ENCODE measurements at regions of chr7 and their contacts with region 1.

Region 1: GRCh38 chr7:141649865-141650634 is 51.9 kb downstream of the DENND11 start:
- DNase-seq: peak; percentile 59 to 80 (median 71)
- ATAC-seq: peak; percentile 92 to 93
- H3K4me3 ChIP-seq: no peak overlapping the region
- H3K27ac ChIP-seq: no peak overlapping the region
- H3K4me1 ChIP-seq: peaks cover 2% of the 10 kb centered on the region
- H3K27me3 ChIP-seq: no peaks in the 10 kb centered on the region

Region 2: GRCh38 chr7:141402277-141402996 is 247.6 kb before region 1 on chr7:
- intact Hi-C with region 1: no loop called
- DNase-seq: no peak
- ATAC-seq: peak; percentile 54 to 73
- H3K4me3 ChIP-seq: no peak overlapping the region
- H3K27ac ChIP-seq: peak overlapping the region; percentile 48
- H3K4me1 ChIP-seq: peaks cover 3% of the 10 kb centered on the region
- H3K27me3 ChIP-seq: no peaks in the 10 kb centered on the region

Region 3: DNA sequence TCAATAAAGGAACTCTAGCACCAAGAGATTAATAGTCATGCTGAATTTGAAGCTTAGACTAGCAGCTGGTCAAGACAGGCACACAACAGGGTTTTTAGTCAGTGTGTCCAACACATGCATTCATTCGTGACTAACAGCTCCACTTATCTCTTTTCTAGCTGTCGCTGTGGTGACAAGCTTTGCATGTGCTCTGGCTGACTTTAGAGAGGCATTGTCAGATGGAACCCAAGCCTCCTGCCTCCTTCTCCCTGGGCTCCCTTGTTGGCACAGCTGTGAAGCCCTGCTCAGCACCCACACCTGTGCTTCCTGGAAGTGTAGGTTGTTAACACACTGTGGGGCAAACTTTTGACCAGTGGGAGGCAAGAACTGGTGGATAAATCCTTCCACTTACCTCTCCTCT is 108.7 kb before region 1 on chr7:
- intact Hi-C with region 1: loop called in 1 of 4 experiments (anchors 10 kb)
- DNase-seq: no peak
- ATAC-seq: peak in 1 of 2 donors; percentile 21
- H3K4me3 ChIP-seq: no peak overlapping the region
- H3K27ac ChIP-seq: no peak overlapping the region
- H3K4me1 ChIP-seq: peaks cover 2% of the 10 kb centered on the region
- H3K27me3 ChIP-seq: no peaks in the 10 kb centered on the region

Measured in right cardiac atrium (tissue), 5 donors.